Left ventricle myocardium superior (tissue), 1 donor: ENCODE measurements at regions of chr5 and their contacts with region 1.

Region 1: GRCh38 chr5:32342656-32343055 is 29.9 kb upstream of the MTMR12 start:
- DNase-seq: no peak
- ATAC-seq: no peak

Region 2: DNA sequence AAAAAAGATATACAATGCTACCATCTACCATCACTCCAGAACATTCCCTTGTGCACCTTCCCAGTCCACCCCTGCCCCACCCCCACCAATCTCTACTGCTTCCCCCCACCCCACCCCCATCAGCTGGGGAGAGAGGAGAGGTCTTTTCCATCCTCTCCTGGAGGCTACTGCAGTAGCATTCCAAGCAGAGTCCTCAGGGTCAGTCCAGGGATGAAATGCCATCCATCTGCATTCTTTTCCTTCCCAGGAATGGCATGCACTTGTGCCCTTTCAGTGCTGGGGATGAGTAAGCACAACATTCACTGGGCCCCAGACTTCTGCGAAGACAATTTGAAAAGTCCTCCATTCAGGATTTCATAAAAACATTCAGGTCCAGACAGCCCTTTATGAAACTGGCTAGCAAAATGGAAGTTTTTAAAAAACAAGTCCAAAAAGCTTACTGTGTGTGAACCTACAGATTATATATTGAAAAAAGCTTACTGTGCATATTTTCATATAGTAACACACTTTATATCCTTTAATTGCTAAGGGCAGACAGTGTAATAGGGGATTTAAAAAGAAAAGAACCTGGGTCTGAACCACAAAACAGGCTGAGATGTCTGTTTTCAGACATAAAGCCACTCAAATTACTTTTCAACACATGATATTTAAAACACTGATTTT is 118.6 kb before region 1 on chr5:
- intact Hi-C with region 1: no loop called
- DNase-seq: no peak
- ATAC-seq: peak; percentile 63

Region 3: GRCh38 chr5:32241034-32241783 is 101.4 kb before region 1 on chr5:
- intact Hi-C with region 1: loop called (anchors 5 kb)
- DNase-seq: no peak
- ATAC-seq: no peak